ENCODE measurements at regions of chr3 and their contacts with region 1.

Region 1: GRCh38 chr3:170811928-170812591 is 57.9 kb downstream of the RPL22L1 start:
- DNase-seq: peak; percentile 47
- H3K4me3 ChIP-seq: no peak overlapping the region
- CTCF ChIP-seq: peak; percentile 75

Region 2: GRCh38 chr3:170307671-170308403 is 504.2 kb before region 1 on chr3:
- CTCF ChIA-PET with region 1: interaction called, 15 read pairs
- POLR2A ChIA-PET with region 1: no interaction called
- DNase-seq: no peak
- H3K4me3 ChIP-seq: no peak overlapping the region
- CTCF ChIP-seq: no peak

Region 3: GRCh38 chr3:170493712-170494182 is 318.3 kb before region 1 on chr3:
- CTCF ChIA-PET with region 1: interaction called, 43 read pairs
- POLR2A ChIA-PET with region 1: no interaction called
- DNase-seq: no peak
- H3K4me3 ChIP-seq: no peak overlapping the region
- CTCF ChIP-seq: no peak

Region 4: GRCh38 chr3:170553788-170554757 is 258.0 kb before region 1 on chr3:
- CTCF ChIA-PET with region 1: interaction called, 39 read pairs
- POLR2A ChIA-PET with region 1: no interaction called
- DNase-seq: no peak
- H3K4me3 ChIP-seq: no peak overlapping the region
- CTCF ChIP-seq: no peak

Region 5: DNA sequence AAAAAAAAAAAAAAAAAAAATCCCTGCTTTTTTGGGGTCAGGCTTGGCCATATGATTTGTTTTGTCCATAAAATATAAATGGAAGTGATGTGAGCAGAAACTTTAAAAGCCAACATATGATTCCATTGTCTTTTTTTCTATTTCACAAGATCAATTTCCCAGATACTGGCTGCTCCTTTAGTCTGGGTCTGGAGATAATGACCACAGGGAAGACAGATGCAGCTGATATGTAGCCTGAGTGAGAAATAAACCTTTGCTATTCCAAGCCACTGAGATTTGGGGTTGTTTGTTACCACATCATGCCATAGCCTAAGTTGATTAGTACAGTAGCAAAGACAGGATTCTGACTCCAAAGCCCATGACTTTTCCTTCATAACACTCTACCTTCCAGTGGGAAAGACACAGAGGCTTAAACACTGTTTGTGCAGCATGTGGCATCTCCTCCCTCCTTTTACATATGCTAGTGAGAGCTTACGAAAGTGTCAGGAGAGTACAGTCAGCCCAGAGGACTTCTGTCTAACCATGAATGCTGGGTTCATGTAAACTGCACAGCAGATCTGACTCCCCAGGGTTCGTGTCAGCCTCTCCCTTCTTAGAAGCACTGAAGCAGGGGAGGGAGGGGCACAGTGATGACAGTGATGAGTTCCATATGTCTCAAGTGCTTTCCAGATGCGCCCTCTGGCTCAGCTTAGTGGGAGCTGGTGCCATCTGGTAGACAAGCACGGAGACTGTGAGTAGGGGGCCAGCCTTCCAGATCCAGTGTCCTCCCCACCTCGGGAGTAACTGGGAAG is 189.5 kb before region 1 on chr3:
- CTCF ChIA-PET with region 1: interaction called, 28 read pairs
- POLR2A ChIA-PET with region 1: interaction called, 3 read pairs
- DNase-seq: peak; percentile 87
- H3K4me3 ChIP-seq: no peak overlapping the region
- CTCF ChIP-seq: no peak

Region 6: GRCh38 chr3:170717410-170718402 is 94.4 kb before region 1 on chr3:
- CTCF ChIA-PET with region 1: interaction called, 18 read pairs
- POLR2A ChIA-PET with region 1: interaction called, 3 read pairs
- DNase-seq: no peak
- H3K4me3 ChIP-seq: no peak overlapping the region
- CTCF ChIP-seq: no peak

Region 7: GRCh38 chr3:170792471-170792870 is 19.6 kb before region 1 on chr3:
- CTCF ChIA-PET with region 1: interaction called, 15 read pairs
- POLR2A ChIA-PET with region 1: no interaction called
- DNase-seq: no peak
- H3K4me3 ChIP-seq: no peak overlapping the region
- CTCF ChIP-seq: no peak

Region 8: GRCh38 chr3:170896781-170897180 is 84.7 kb after region 1 on chr3:
- CTCF ChIA-PET with region 1: no interaction called
- POLR2A ChIA-PET with region 1: no interaction called
- DNase-seq: no peak
- H3K4me3 ChIP-seq: no peak overlapping the region
- CTCF ChIP-seq: no peak

Region 9: GRCh38 chr3:170961616-170962400 is 149.7 kb after region 1 on chr3:
- CTCF ChIA-PET with region 1: no interaction called
- POLR2A ChIA-PET with region 1: no interaction called
- DNase-seq: no peak
- H3K4me3 ChIP-seq: no peak overlapping the region
- CTCF ChIP-seq: peak; percentile 27

Region 10: GRCh38 chr3:171116365-171116764 is 304.3 kb after region 1 on chr3:
- CTCF ChIA-PET with region 1: no interaction called
- POLR2A ChIA-PET with region 1: no interaction called
- DNase-seq: no peak
- H3K4me3 ChIP-seq: no peak overlapping the region
- CTCF ChIP-seq: no peak

Measured in AG04449 (cell line).